H1 (cell line): ENCODE measurements at regions of chr7 and their contacts with region 1.

Region 1: DNA sequence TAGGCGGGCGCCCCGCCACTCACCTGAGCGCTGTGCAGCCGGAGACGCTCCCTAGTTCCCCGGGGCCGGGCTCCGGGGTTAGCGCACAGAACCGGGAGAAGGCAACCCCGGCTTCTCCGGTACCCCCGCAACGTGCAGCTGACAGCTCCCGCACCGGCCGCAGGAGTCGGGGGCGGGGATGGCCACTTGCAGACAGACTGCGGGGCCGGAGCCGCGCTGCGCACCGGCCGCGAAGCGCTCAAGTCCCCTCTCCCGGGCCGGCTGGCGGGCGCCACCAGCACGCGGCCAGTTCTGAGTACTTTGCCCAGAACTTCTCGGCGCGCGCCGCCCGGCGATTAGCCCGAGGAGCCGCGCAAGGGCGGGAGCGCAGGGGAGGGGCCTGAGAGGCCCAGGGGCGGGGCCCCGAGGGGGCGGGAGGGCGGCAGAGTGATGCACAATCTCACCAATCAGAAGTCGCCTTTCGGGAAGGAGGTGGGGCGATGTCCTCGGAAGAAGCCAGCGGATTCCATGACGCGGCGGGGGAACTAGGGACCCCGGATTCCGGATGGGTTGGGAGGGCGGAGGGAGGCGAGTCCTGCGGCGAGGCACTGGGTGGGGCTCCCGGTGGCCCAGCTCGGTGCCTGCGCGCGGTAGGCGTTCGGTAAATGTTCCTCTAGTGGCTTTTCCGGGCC is at the start of gene OSBPL3:
- DNase-seq: peak; percentile 90 to 98
- H3K4me3 ChIP-seq: peak within 1 kb of the TSS; percentile 47 to 79 (median 76)
- H3K27ac ChIP-seq: no peak within 1 kb of the TSS
- H3K4me1 ChIP-seq: peaks cover 6 to 14% (median 10%) of the 10 kb centered on the region in 4 experiments
- H3K27me3 ChIP-seq: peaks cover 8 to 36% (median 28%) of the 10 kb centered on the region in 4 experiments
- CTCF ChIP-seq: peak in 1 of 3 experiments; percentile 11; a peak in 1 of 4 replicates
- EP300 ChIP-seq: no peak
- POLR2A ChIP-seq: peak in 1 of 2 experiments; percentile 51; a peak in 2 of 3 replicates
- RAD21 ChIP-seq: 0 out of 4 replicates have a peak, but pooled peaks of 1 of the 2 experiments have one; percentile 1
- total RNA-seq, gene OSBPL3: 9.4 and 13.9 TPM in 2 replicates

Region 2: GRCh38 chr7:25007668-25008067 is 27.7 kb after region 1 on chr7:
- CTCF ChIA-PET with region 1: interaction called, 10 read pairs
- POLR2A ChIA-PET with region 1: no interaction called
- DNase-seq: no peak
- H3K4me3 ChIP-seq: no peak overlapping the region
- H3K27ac ChIP-seq: no peak overlapping the region
- H3K4me1 ChIP-seq: peaks cover 0 to 4% (median 0%) of the 10 kb centered on the region in 4 experiments; a peak in 3 of 7 replicates
- H3K27me3 ChIP-seq: no peaks in the 10 kb centered on the region
- CTCF ChIP-seq: no peak
- EP300 ChIP-seq: no peak
- POLR2A ChIP-seq: no peak
- RAD21 ChIP-seq: no peak